ENCODE measurements at regions of chr17 and their contacts with region 1.

Region 1: DNA sequence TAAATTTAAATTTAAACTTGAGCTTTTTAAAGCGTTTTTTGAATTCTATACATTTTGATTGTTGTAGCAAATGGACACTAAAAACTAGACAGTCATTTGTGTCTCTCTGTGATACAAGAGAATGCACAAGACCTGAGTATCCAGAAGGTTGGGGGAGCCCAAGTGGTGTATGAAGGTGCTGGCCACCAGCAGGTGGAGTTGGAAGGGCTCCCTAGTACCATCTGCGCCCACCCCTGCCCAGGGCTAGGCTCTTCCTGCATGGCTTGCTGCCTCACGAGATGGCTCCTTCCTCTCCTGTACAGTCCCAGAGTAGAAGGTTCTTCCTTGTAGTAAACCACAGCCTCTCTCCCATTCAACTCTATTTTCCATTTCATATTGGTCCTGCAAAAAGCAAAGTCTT is 17.0 kb downstream of the GID4 start:
- DNase-seq: no peak
- H3K4me3 ChIP-seq: no peak overlapping the region
- H3K27ac ChIP-seq: no peak overlapping the region
- H3K4me1 ChIP-seq: peaks cover 0 to 7% of the 10 kb centered on the region in 2 donors
- H3K27me3 ChIP-seq: no peaks in the 10 kb centered on the region
- CTCF ChIP-seq: no peak
- POLR2A ChIP-seq: no peak

Region 2: DNA sequence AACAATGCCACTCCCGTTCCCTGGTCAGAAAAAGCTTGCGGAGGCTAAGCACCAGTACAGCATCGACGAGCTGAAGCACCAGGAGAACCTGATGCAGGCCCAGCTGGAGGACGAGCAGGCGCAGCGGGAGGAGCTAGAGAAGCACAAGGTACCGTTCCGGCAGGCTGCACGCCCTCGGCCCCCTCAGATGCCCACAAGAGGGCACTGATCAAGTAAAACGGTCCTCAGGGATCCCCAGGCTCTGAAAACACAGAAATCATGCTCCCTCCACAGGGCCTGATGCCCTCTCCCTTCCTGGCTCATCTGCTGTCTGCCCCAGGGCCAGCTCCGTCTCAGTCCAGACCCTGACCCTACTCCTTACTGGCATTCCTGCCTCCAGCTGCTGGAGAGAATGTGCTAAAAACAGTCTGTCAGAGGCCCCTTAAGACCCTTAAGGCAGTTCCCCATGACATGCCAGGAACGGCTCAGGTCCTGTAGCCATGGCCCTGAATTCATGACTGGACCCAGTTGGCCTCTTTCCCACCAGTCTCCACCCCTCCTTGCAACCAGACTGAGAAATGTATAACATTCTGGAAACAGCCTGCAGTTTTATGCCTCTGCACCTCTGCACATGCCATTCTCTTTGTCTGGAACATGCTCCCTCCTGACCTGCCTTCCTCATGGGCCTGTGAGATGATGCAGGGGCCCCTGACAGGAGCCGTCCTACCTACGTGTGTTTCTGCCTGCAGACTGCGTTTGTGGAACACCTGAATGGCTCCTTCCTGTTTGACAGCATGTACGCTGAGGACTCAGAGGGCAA is 61.7 kb before region 1 on chr17:
- intact Hi-C with region 1: loop called (anchors 10 kb)
- DNase-seq: no peak
- H3K4me3 ChIP-seq: no peak overlapping the region
- H3K27ac ChIP-seq: no peak overlapping the region
- H3K4me1 ChIP-seq: no peaks in the 10 kb centered on the region
- H3K27me3 ChIP-seq: no peaks in the 10 kb centered on the region
- CTCF ChIP-seq: no peak
- POLR2A ChIP-seq: no peak

Measured in thyroid gland (tissue), 4 donors.